Activated naive CD4-positive, alpha-beta T cell treated with anti-CD3 and anti-CD28 coated beads for 36 hours (primary cell): ENCODE measurements at regions of chr7 and their contacts with region 1.

Region 1: DNA sequence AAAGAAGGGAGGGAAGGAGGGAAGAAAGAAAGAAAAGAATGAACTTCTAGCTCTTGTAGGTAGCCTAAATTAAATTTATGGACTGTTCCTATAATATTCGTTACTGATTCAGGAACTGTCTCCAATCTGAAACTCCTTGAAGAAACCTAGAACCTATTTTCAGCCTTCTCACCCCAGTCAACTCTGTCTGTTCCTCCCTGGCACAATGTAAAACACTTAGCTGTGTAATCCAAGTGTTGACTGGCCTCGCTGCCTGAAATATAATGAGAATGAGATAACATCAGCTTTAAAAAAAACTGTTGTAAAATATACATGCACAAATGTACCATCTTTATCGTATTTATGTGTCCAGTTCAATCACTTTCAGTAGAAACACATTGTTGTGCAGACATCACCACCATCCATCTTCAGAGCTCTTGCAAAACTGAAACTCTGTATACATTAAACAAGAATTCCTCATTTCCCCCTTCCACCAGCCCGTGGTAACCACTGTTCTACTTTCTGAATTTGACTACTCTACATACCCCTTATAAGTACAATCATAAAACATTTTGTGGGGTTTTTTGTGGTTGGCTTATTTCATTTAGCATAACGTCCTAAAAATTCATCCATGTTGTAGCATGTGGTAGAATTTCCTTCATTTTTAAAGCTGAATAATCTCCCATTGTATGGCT is 6.3 kb upstream of the C7orf33 start:
- DNase-seq: peak; percentile 42
- H3K4me3 Mint-ChIP-seq: no peak overlapping the region
- H3K27ac Mint-ChIP-seq: no peak overlapping the region
- H3K4me1 Mint-ChIP-seq: peaks cover 17% of the 10 kb centered on the region
- H3K27me3 Mint-ChIP-seq: no peaks in the 10 kb centered on the region

Region 2: DNA sequence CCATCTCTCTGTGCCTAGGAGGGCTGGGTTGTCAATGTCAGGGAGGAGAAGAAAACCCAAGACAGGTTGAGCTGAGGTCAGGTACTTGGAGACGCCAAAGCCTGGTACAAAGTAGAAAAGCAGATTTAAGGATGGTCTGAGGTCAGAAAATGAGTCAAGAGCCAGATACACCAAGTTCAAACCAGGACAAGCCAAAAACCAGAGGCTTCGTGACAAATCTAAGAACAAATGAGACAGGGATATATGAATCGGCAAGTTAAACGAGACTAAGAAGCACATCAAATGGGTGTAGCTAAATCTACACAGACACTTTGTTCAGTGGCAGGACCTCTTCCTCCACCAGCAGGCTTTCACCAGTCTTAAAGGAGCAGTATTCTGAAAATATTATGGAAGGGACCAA is 40.4 kb after region 1 on chr7:
- CTCF ChIA-PET with region 1: interaction called, 3 read pairs
- intact Hi-C with region 1: loop called (anchors 2 kb)
- DNase-seq: no peak
- H3K4me3 Mint-ChIP-seq: no peak overlapping the region
- H3K27ac Mint-ChIP-seq: no peak overlapping the region
- H3K4me1 Mint-ChIP-seq: peaks cover 56% of the 10 kb centered on the region
- H3K27me3 Mint-ChIP-seq: peaks cover 2% of the 10 kb centered on the region

Region 3: DNA sequence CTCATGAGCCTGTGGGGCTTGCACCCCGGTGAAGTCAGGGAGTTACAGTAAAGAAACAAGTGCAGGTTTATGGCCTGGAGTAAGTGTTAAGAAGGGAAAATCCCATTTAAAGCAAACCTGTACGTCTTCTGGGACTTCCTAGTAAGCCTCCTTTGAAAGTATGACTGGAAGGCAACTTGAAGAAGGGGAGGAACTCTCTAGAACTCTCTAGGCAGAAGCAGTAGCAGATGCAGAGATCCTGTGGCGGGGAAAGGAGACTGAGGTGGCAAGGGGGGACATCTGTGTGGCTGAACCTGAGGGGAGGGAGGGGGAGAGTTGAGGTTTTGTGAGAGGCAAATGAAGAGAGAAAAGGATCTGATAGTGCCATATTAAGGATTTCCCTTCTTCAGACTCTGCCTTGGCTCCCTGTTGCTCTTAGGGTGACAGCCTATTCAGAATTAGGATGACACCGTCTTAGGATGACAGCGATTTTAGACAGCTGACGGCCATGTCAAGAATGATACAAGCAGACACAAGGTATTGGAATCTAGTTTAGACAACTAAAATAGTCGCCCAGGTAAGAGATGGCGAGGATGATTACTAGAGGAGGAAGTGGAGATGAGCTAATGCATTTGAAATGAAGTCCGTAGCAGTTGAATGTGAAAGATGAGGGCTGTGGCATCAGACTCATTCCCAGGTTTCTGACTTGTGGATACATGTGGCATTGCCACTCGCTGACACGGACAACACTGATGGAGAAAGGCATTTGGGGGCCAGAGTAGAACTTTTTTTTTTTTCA is 143.4 kb after region 1 on chr7:
- CTCF ChIA-PET with region 1: interaction called, 3 read pairs
- intact Hi-C with region 1: loop called (anchors 2 kb)
- DNase-seq: peak; percentile 83
- H3K4me3 Mint-ChIP-seq: no peak overlapping the region
- H3K27ac Mint-ChIP-seq: peak overlapping the region; percentile 64
- H3K4me1 Mint-ChIP-seq: peaks cover 66% of the 10 kb centered on the region
- H3K27me3 Mint-ChIP-seq: no peaks in the 10 kb centered on the region